Naive thymus-derived CD4-positive, alpha-beta T cell (primary cell): ENCODE measurements at regions of chr11 and their contacts with region 1.

Region 1: GRCh38 chr11:33161120-33162005 is at the start of gene CSTF3:
- DNase-seq: peak; percentile 84 to 95 (median 89)
- ATAC-seq: peak; percentile 98
- H3K4me3 ChIP-seq: peak within 1 kb of the TSS; percentile 97
- H3K4me3 Mint-ChIP-seq: peak within 1 kb of the TSS; percentile 95 to 100 (median 100)
- H3K27ac ChIP-seq: peak within 1 kb of the TSS; percentile 84
- H3K27ac Mint-ChIP-seq: peak within 1 kb of the TSS; percentile 95 to 100 (median 99)
- H3K4me1 ChIP-seq: peaks cover 11 to 19% of the 10 kb centered on the region in 2 donors
- H3K4me1 Mint-ChIP-seq: peaks cover 40 to 64% (median 55%) of the 10 kb centered on the region in 7 donors
- H3K27me3 ChIP-seq: no peaks in the 10 kb centered on the region
- H3K27me3 Mint-ChIP-seq: no peaks in the 10 kb centered on the region
- total RNA-seq, gene CSTF3: 14.6 to 38.6 (median 28.7) TPM

Region 2: GRCh38 chr11:31369348-31370329 is 1791.7 kb before region 1 on chr11 and contains the starts of genes DCDC1 and DNAJC24:
- CTCF ChIA-PET with region 1: no interaction called
- POLR2A ChIA-PET with region 1: no interaction called
- intact Hi-C with region 1: loop called in 1 of 2 experiments (anchors 5 kb)
- DNase-seq: peak; percentile 84 to 90 (median 89)
- ATAC-seq: peak; percentile 99
- H3K4me3 ChIP-seq: peak within 1 kb of the TSS; percentile 96
- H3K4me3 Mint-ChIP-seq: peak within 1 kb of the TSS; percentile 93 to 100 (median 98)
- H3K27ac ChIP-seq: peak within 1 kb of the TSS; percentile 81
- H3K27ac Mint-ChIP-seq: peak within 1 kb of the TSS; percentile 90 to 97 (median 95)
- H3K4me1 ChIP-seq: peaks cover 21 to 31% of the 10 kb centered on the region in 2 donors
- H3K4me1 Mint-ChIP-seq: peaks cover 28 to 82% (median 66%) of the 10 kb centered on the region in 7 donors
- H3K27me3 ChIP-seq: no peaks in the 10 kb centered on the region
- H3K27me3 Mint-ChIP-seq: peaks cover 0 to 18% (median 0%) of the 10 kb centered on the region in 5 donors
- total RNA-seq, gene DCDC1: 0.13 to 0.81 (median 0.26) TPM in 4 of 5 experiments, not detected in the other
- total RNA-seq, gene DNAJC24: 12.2 to 26.3 (median 18.6) TPM

Region 3: DNA sequence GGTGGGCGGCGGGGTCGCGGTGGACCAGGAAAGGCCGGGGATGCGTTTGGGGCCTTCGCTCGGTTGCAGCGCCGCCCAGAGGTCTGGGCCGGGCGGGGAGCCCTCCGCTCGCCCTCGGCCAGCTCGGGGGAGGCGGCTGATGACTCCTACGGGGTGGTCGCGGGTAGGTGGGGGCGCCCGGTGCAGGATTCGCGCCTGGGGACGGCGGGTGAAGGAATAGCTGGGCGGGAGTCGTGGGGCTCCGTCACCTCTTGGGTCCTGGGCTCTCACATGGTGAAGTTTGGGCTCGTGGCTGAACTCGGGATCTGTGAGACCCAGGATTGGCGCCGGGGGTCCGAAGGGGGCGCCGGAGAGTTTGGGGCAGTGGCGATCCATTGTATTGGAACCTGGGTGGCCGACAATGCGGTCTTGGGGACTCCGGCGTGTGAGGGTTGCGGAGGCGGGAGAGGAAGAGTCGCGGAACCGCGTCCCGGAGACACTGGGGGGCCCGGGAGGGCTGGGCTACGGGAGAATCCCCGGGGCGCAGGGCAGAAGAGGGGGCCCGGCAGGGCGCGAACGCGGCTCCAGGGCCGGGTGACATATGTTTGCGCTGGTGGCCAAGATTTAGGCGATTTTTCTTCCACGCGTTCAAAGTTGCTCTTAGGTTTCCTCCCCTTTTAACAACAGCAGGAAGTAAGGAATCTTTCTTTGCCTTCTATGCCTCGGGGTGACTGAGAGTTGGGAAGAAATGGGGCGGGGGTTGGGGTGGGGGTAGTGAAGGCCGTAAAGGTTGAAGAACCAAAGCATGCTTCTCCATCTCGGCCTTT is 267.8 kb before region 1 on chr11:
- CTCF ChIA-PET with region 1: no interaction called
- POLR2A ChIA-PET with region 1: no interaction called
- intact Hi-C with region 1: loop called (anchors 1 to 2 kb)
- DNase-seq: peak in 6 of 9 donors; percentile 34 to 67 (median 42)
- ATAC-seq: peak; percentile 47
- H3K4me3 ChIP-seq: peak overlapping the region; percentile 71
- H3K4me3 Mint-ChIP-seq: peak overlapping the region; percentile 83 to 96 (median 94)
- H3K27ac ChIP-seq: peak overlapping the region; percentile 71
- H3K27ac Mint-ChIP-seq: peak overlapping the region; percentile 58 to 95 (median 80)
- H3K4me1 ChIP-seq: peaks cover 5 to 15% of the 10 kb centered on the region in 2 donors
- H3K4me1 Mint-ChIP-seq: peaks cover 26 to 46% (median 38%) of the 10 kb centered on the region in 7 donors
- H3K27me3 ChIP-seq: no peaks in the 10 kb centered on the region
- H3K27me3 Mint-ChIP-seq: peaks cover 0 to 21% (median 0%) of the 10 kb centered on the region in 5 donors

Region 4: DNA sequence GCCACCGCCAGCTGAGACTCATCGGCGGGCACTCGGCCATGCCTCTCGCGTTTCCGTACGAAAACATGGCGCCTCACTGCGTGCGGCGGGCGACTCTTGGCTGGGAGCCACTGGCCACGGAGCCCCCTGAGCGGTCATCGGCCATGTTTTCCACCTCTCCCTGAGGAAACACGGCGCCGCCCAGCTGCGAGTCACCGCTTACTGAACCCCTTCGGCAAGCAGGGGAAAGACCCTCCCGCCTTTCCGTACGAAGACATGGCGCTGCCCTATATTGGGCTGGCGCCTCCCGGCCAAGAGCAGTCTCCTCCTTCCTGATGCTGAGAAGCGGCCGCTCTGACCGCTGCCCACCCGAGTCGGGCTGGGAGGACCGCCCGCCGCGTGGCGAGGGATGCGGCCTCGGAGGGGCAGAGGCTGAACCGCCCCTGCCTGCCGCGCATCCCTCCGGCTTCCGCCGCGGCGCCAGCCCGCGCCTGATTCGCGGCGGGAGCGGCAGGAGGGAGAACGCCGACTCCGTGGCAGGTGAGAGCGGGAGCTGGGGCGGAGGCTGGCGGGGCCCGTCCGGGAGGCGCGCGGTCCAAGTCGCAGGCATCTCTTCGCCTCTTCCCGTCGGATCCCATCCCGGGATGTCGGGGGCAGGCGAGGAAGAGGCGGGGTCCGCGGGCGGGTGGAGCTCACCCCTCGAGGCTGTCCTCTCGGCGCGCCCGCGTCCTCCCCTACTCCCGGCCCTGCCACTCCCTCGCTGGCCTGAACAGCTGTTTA is 121.9 kb before region 1 on chr11 and contains the start of gene TCP11L1:
- CTCF ChIA-PET with region 1: no interaction called
- POLR2A ChIA-PET with region 1: interaction called, 3 read pairs
- intact Hi-C with region 1: loop called (anchors 1 kb)
- DNase-seq: peak; percentile 57 to 88 (median 76)
- ATAC-seq: peak; percentile 93
- H3K4me3 ChIP-seq: peak within 1 kb of the TSS; percentile 100
- H3K4me3 Mint-ChIP-seq: peak within 1 kb of the TSS; percentile 91 to 97 (median 94)
- H3K27ac ChIP-seq: peak within 1 kb of the TSS; percentile 82
- H3K27ac Mint-ChIP-seq: peak within 1 kb of the TSS; percentile 77 to 95 (median 92)
- H3K4me1 ChIP-seq: peaks cover 3 to 9% of the 10 kb centered on the region in 2 donors
- H3K4me1 Mint-ChIP-seq: peaks cover 0 to 17% (median 14%) of the 10 kb centered on the region in 7 donors
- H3K27me3 ChIP-seq: no peaks in the 10 kb centered on the region
- H3K27me3 Mint-ChIP-seq: peaks cover 0 to 17% (median 0%) of the 10 kb centered on the region in 5 donors
- total RNA-seq, gene TCP11L1: 9.1 to 17.1 (median 13.3) TPM

Region 5: GRCh38 chr11:33195462-33196173 is 34.3 kb after region 1 on chr11:
- CTCF ChIA-PET with region 1: no interaction called
- POLR2A ChIA-PET with region 1: no interaction called
- intact Hi-C with region 1: no loop called
- DNase-seq: no peak
- ATAC-seq: peak; percentile 88
- H3K4me3 ChIP-seq: no peak overlapping the region
- H3K4me3 Mint-ChIP-seq: no peak overlapping the region
- H3K27ac ChIP-seq: no peak overlapping the region
- H3K27ac Mint-ChIP-seq: no peak overlapping the region
- H3K4me1 ChIP-seq: no peaks in the 10 kb centered on the region
- H3K4me1 Mint-ChIP-seq: peaks cover 0 to 7% (median 0%) of the 10 kb centered on the region in 7 donors
- H3K27me3 ChIP-seq: no peaks in the 10 kb centered on the region
- H3K27me3 Mint-ChIP-seq: no peaks in the 10 kb centered on the region

Region 6: DNA sequence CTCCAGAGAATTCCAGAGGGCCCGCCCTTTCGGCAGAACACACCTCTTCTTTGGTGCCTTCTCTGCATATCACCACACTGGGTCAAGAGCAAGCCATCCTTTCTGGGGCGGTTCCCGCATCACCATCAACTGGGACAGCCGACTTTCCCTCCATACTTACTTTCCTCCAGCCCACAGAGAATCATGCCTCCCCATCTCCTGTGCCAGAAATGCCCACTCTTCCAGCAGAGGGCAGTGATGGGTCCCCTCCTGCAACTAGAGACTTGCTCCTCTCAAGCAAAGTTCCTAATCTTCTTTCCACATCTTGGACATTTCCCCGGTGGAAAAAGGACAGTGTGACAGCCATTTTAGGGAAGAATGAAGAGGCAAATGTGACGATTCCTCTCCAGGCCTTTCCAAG is 381.6 kb after region 1 on chr11:
- CTCF ChIA-PET with region 1: no interaction called
- POLR2A ChIA-PET with region 1: no interaction called
- intact Hi-C with region 1: loop called in 1 of 2 experiments (anchors 10 kb)
- DNase-seq: peak in 6 of 9 donors; percentile 11 to 31 (median 16)
- ATAC-seq: no peak
- H3K4me3 ChIP-seq: no peak overlapping the region
- H3K4me3 Mint-ChIP-seq: no peak overlapping the region
- H3K27ac ChIP-seq: no peak overlapping the region
- H3K27ac Mint-ChIP-seq: no peak overlapping the region
- H3K4me1 ChIP-seq: no peaks in the 10 kb centered on the region
- H3K4me1 Mint-ChIP-seq: peaks cover 0 to 3% (median 0%) of the 10 kb centered on the region in 7 donors
- H3K27me3 ChIP-seq: no peaks in the 10 kb centered on the region
- H3K27me3 Mint-ChIP-seq: peaks cover 21 to 33% (median 25%) of the 10 kb centered on the region in 5 donors

Region 7: GRCh38 chr11:33742249-33742851 is 581.0 kb after region 1 on chr11:
- CTCF ChIA-PET with region 1: interaction called, 3 read pairs
- POLR2A ChIA-PET with region 1: no interaction called
- intact Hi-C with region 1: loop called in 1 of 2 experiments (anchors 2 kb)
- DNase-seq: peak in 4 of 9 donors; percentile 26 to 37 (median 28)
- ATAC-seq: peak; percentile 77
- H3K4me3 ChIP-seq: no peak overlapping the region
- H3K4me3 Mint-ChIP-seq: no peak overlapping the region
- H3K27ac ChIP-seq: no peak overlapping the region
- H3K27ac Mint-ChIP-seq: peak overlapping the region in 2 of 9 donors; percentile 20 to 67
- H3K4me1 ChIP-seq: no peaks in the 10 kb centered on the region
- H3K4me1 Mint-ChIP-seq: peaks cover 0 to 4% (median 0%) of the 10 kb centered on the region in 7 donors
- H3K27me3 ChIP-seq: no peaks in the 10 kb centered on the region
- H3K27me3 Mint-ChIP-seq: peaks cover 0 to 6% (median 0%) of the 10 kb centered on the region in 5 donors

Region 8: DNA sequence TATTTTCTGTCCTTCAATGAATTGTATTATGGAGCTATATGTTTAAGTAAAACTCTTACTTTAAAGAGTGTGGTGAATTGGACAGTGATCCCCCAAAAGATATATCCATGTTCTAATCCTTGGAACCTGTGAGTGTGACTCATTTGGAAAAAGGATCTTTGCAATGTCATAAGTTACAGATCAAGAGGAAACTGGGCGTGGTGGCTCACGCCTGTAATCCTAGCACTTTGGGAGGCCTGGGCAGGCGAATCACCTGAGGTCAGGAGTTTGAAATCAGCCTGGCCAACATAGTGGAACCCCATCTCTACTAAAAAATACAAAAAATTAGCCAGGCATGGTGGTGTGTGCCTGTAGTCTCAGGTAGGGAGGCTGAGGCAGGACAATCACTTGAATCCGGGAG is 1315.5 kb after region 1 on chr11:
- CTCF ChIA-PET with region 1: no interaction called
- POLR2A ChIA-PET with region 1: no interaction called
- intact Hi-C with region 1: no loop called
- DNase-seq: no peak
- ATAC-seq: no peak
- H3K4me3 ChIP-seq: no peak overlapping the region
- H3K4me3 Mint-ChIP-seq: no peak overlapping the region
- H3K27ac ChIP-seq: no peak overlapping the region
- H3K27ac Mint-ChIP-seq: peak overlapping the region in 1 of 9 donors; percentile 41
- H3K4me1 ChIP-seq: no peaks in the 10 kb centered on the region
- H3K4me1 Mint-ChIP-seq: no peaks in the 10 kb centered on the region
- H3K27me3 ChIP-seq: no peaks in the 10 kb centered on the region
- H3K27me3 Mint-ChIP-seq: peaks cover 0 to 22% (median 0%) of the 10 kb centered on the region in 5 donors